ENCODE measurements at regions of chr6 and their contacts with region 1.

Region 1: DNA sequence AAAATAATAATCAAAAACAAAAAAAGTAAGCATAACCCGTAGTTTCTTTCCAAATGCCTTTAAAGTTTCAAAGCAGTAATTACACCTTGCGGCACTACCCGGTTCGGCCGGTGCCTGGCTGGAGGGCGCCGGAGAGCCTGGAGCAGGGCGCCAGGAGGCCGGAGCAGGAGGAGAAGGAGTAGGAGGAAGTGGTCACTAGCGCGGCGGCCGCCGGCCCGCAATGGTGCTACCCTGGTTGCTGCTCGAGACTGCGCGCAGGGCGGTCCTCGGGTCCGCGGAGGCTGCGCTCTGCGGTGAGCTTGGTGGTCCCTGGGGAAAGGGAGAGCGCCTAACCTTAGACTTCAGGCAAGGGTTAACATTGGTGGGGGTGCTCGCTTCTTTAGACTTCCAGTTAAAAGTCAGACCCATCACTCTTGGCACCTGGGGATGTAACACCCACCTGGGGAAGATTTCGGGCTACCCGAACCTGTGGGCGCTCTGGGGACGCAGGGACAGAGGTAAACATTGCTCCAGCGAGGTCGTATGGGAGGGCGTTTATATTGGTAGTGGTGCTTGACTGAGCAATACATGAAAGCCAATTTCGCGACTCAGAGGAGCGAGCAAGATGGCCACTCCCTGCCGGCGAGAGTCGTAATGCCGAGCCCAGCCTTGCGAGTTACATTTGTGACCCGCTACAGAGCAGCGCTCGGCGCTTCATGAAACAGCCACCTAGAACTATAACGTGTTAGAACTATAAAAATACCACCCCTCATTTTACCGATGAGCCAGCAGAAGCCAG is 5.8 kb upstream of the USP45 start:
- DNase-seq: peak; percentile 85 to 93
- H3K4me3 ChIP-seq: peak overlapping the region; percentile 76 to 84
- H3K27ac ChIP-seq: peak overlapping the region; percentile 94 to 95
- H3K4me1 ChIP-seq: peaks cover 0 to 24% (median 17%) of the 10 kb centered on the region in 4 donors
- H3K27me3 ChIP-seq: no peaks in the 10 kb centered on the region
- CTCF ChIP-seq: peak; percentile 83 to 97

Region 2: DNA sequence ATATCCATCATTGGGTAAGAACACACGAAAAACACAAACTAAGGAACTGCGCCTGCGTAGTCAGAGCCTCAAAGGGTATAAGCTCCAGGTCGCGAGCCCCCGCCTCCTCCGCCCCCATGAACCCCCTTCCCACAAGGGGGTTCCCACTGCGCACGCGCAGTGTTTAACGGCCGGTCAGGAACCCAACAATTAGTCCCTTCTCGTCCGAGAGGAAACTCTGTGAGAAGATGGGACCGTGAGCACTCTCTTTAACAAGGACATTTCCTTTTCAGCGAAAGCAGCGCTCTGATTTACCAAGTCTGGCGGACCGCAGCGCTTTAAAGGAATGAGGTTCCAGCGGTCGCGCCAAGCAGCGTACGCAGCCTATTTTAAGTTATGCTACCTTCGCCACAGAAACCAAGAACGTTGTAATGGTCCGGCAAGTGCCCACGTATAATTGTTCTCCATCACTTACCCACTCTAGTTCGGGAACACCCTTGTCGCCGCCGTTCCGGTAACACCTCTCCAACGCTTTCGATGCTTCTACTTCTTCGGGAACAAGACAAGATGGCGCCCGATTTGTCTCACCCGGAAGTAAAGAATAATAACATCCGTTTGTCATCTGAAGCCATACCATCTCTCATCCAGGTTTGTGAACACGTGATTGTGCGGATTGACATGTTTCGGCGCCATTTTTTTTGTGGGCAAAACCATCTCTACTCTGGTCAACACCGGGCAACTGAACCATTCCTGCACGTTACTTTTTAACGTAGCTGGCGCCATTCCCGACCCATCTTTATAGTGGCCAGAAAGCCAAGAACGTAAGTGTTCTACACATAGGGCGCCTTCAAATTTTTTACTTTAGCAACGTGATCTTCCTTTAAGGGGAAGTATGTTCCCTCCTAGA is 96.0 kb before region 1 on chr6 and contains the start of gene PNISR:
- intact Hi-C with region 1: loop called (anchors 5 kb)
- DNase-seq: peak; percentile 94 to 95
- H3K4me3 ChIP-seq: peak within 1 kb of the TSS; percentile 69 to 85
- H3K27ac ChIP-seq: peak within 1 kb of the TSS; percentile 92 to 98
- H3K4me1 ChIP-seq: peaks cover 0 to 66% (median 43%) of the 10 kb centered on the region in 4 donors
- H3K27me3 ChIP-seq: no peaks in the 10 kb centered on the region
- CTCF ChIP-seq: no peak

Region 3: DNA sequence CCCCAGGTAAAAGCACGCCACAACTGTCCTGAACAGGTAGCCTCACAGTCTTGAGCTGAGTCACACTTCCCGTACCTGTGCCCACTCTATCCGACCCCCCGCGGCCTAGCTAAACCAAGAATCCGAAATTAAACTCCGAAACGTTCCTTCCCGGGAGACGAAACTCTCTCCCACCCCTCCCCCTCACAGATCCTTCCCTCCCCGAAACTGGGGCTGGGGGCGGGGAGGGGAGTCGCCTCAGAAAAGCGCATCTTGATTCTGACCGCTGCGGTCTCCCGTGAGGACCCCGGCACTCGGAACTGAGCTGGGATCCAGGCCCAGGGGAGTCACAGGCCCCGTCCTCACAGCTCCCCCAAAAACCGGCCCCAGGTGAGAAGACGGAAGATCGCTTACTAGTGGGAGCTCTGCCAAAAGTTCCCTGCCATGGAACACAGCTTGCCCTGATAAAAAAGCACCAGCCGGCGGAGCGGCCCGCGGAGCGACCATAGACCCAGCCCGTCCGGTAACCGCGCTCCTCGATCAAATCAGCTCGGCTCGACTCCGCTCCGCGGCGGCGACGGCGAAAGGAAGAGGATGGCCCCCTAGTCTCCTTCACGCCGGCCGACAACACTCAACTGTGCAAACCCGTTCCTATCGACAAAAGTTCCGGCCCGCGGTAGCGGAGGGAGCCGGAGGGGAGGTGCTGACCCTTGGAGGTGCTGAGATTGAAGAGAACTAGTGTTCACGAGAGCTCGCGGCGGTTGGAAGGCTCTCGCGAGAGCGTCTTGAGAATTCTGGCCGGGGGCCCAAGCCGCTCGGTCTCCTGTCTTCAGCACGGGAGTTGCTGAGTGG is 47.3 kb after region 1 on chr6 and contains the start of gene CCNC:
- intact Hi-C with region 1: loop called (anchors 5 kb)
- DNase-seq: peak; percentile 92 to 97
- H3K4me3 ChIP-seq: peak within 1 kb of the TSS; percentile 79 to 94
- H3K27ac ChIP-seq: peak within 1 kb of the TSS; percentile 75 to 80
- H3K4me1 ChIP-seq: peaks cover 0 to 15% (median 12%) of the 10 kb centered on the region in 4 donors
- H3K27me3 ChIP-seq: no peaks in the 10 kb centered on the region
- CTCF ChIP-seq: no peak

Region 4: GRCh38 chr6:99711302-99711701 is 190.3 kb after region 1 on chr6:
- intact Hi-C with region 1: no loop called
- DNase-seq: no peak
- H3K4me3 ChIP-seq: no peak overlapping the region
- H3K27ac ChIP-seq: no peak overlapping the region
- H3K4me1 ChIP-seq: no peaks in the 10 kb centered on the region
- H3K27me3 ChIP-seq: no peaks in the 10 kb centered on the region
- CTCF ChIP-seq: no peak